Left cardiac atrium (tissue), 4 donors: ENCODE measurements at regions of chr5 and their contacts with region 1.

Region 1: DNA sequence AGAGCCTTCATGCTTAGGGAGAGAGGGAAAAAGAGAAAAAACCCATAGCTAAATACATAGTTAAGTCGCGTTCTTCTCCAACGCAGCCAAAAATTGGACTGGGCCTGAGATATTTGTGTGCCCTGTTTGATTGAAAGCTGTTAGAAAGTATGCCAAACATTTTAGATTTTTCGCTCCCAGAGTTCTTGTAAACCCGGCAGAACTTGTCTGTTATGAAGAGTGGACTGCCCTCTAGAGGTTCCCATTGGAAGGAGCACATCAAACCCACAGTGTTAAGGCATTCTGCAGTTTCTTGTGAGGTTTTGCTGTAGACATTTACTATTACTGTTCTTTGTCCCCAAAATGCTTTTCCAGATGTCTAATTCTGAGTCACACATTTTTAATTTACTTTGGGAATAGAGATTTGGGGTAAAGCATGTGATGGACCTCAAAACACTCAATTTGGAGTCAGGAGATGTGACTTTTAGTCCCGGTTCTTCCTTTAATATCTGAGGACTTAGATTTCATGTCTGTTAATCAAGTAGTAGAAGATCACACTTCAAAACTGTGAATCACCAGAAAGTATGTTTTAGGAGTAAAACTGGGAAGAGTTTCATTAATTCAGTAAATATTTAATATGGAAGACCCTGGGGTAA is 96.6 kb downstream of the PCSK1 start:
- DNase-seq: peak; percentile 43
- ATAC-seq: peak; percentile 78 to 79

Region 2: DNA sequence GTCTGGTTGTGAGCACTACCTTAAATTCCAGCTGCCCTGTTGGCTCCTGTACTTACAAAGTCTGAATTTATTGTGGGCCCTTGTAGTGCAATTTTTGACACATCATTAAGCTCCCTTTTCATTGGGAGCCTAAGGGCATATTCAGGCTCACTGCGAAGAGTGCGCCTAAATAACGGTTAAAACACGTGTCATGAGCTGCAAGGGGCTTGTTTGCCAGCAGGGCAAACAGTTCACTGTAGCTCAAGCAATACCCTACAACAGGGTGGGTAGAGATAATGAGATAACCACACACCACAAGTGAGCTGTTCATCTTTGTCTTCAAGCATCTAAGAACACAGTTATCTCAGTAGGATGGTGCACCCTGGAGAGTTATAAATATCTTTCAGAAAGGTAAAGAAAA is 1503.8 kb before region 1 on chr5:
- intact Hi-C with region 1: no loop called
- DNase-seq: no peak
- ATAC-seq: no peak

Region 3: GRCh38 chr5:95773335-95774059 is 563.0 kb before region 1 on chr5:
- intact Hi-C with region 1: loop called in 1 of 2 experiments (anchors 10 kb)
- DNase-seq: no peak
- ATAC-seq: peak in 1 of 2 donors; percentile 50

Region 4: DNA sequence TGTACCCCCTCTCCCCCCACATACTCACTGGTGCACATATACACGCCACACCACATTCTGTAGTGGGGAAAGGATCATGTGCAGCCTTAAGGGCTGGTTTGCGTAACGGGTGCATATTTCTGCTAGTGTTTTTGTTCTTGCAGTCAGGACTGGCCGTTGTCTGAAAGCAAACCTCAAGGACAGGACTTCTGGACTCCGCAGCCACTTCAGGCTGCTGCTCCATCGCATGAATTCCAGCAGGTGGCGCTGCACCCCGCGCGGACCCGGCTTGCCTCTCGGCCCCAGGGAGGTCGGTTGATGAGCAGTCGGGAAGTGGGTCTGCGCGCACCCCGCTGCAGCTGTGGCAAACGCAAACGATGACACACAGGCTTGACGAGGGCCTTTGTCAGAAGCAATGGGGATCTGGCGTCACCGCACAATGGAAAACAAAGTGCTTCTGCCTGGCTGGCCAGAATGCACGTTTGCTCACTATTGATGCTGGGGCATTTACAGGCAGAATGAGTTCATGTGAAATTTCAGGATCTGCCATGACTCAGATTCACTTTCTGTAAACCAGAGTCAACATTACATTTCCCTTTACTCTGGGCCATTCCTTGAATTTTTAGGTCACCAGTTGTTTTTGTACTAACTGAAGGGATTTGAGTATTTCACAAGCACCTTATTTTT is 477.7 kb before region 1 on chr5:
- intact Hi-C with region 1: loop called (anchors 1 to 5 kb)
- DNase-seq: peak; percentile 92
- ATAC-seq: peak; percentile 75 to 80

Region 5: DNA sequence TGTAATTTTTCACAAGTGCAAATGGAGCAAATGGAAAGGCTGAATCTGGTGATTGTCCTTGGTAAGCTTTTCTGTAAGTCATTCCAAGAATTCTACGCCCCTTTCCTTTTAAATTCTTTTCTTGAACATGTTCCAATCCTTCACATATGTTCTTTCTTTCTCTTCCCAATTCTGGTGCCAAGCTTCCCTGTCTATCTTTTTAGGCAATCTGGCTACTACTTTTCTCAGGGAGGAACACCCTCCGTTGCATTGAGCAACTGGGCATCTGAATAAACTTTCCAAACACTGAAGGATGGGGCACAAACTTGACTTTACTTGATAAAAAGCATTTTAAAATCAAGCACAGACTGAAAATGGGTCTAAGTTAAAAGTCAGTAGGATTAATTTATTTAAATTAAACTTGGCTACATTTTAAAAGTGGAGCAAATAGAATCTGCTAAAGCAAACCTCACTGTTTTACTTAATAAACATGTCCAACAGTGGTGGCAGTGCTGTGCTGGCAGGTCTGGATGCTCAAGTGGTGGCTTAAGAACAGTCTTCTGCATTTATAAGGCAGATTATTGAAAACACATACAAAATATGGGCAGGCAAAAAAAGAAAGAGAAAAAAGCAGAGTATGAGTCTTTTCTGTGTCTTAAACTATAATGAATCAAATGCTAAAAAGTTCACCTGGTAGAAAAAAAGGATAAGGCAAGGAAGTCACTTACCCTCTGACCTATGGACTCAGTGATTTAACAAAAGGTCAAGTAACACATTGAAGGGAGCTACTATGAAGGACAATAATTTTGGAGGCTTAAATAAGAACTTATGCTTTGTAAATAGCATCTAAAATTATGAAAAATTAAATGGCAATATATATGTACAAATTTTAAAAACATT is 380.2 kb before region 1 on chr5:
- intact Hi-C with region 1: loop called (anchors 2 to 10 kb)
- DNase-seq: peak; percentile 20
- ATAC-seq: no peak

Region 6: GRCh38 chr5:95961617-95962474 is 374.6 kb before region 1 on chr5 and contains the start of gene ELL2:
- intact Hi-C with region 1: loop called (anchors 2 to 10 kb)
- DNase-seq: peak; percentile 99
- ATAC-seq: peak; percentile 91 to 93
- total RNA-seq, gene ELL2: 39.1 to 77.7 TPM

Region 7: GRCh38 chr5:96125231-96125891 is 211.1 kb before region 1 on chr5:
- intact Hi-C with region 1: loop called in 1 of 2 experiments (anchors 10 kb)
- DNase-seq: no peak
- ATAC-seq: peak; percentile 63 to 71